GM12878 (cell line): ENCODE measurements at regions of chr4 and their contacts with region 1.

Region 1: DNA sequence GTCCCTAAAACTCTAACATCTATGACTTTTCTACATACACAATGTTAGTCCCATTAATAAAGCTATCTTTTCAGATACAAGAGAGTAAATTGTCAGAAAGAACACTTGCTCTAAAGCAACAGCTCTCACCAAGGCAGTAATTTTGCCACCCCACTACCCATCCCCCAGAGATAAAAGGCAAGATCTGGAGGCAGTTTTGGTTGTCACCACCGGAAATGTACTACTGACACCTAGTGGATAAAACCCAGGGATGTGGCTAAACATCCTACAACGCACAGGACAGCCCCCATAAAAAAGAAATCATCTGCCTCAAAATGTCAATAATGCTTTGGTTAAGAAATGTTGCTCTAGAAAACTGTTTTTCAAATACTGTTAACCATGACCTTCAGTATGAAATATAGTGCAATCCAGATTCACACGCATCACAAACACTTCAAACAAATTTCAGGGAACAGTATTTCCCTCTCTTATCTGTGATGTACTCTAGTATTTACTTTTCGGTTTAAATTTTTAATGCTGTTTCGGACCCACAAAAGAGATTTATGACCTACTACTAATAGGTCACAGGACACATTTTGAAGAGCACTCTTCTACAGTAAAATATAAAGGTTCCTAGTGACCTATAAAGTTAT is 5.1 kb downstream of the FBXL5 start:
- DNase-seq: peak; percentile 45
- ATAC-seq: peak; percentile 75
- H3K4me3 ChIP-seq: 0 out of 2 replicates have a peak overlapping the region, but pooled peaks have one; percentile 31
- H3K27ac ChIP-seq: no peak overlapping the region
- H3K4me1 ChIP-seq: peaks cover 25% of the 10 kb centered on the region
- H3K27me3 ChIP-seq: no peaks in the 10 kb centered on the region
- CTCF ChIP-seq: peak; percentile 63 to 80 (median 78)
- EP300 ChIP-seq: no peak
- POLR2A ChIP-seq: no peak
- RAD21 ChIP-seq: peak; percentile 87

Region 2: GRCh38 chr4:14695095-14695845 is 954.8 kb before region 1 on chr4:
- CTCF ChIA-PET with region 1: no interaction called
- POLR2A ChIA-PET with region 1: no interaction called
- RAD21 ChIA-PET with region 1: no interaction called
- SMC1A ChIA-PET with region 1: no interaction called
- in situ Hi-C with region 1: no loop called
- intact Hi-C with region 1: no loop called
- DNase-seq: no peak
- ATAC-seq: no peak
- H3K4me3 ChIP-seq: no peak overlapping the region
- H3K27ac ChIP-seq: no peak overlapping the region
- H3K4me1 ChIP-seq: no peaks in the 10 kb centered on the region
- H3K27me3 ChIP-seq: no peaks in the 10 kb centered on the region
- CTCF ChIP-seq: no peak
- EP300 ChIP-seq: no peak
- POLR2A ChIP-seq: no peak
- RAD21 ChIP-seq: no peak

Region 3: DNA sequence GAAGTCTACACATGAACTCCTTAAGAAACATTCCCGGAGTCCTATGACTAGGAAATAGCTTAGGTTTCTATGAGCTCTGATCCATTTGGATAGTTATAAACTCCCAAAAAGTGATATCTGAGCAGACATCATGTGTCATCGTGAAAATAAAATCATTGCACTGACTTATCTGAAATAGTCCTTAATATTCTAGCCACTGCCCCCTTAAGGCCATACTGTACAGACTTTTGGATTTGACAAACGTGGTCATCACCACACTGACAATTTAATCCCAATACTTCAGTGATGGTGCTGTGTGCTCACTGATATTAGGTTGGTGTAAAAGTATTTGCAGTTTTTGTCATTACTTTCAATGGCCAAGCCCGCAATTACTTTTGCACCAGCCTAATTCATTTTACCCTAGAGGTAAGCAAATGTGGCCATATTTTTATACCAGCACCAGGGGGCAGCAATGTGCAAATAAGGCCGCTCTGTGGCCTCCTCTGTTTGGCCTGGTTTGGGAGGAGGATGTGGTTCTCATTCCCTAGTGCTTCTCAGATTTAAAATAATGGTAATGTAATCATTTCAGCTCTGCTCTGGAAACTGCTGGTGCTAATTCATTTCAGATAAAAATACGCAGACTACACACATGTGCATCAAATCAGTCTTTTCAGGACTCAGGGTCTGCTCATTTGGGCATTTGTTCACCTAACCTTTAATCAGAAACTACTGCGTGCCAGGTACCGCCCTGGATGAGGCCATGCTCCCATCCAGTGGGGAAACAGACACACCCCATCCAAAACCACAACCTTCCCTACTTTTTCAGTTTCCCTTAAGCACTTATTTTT is 418.6 kb before region 1 on chr4:
- CTCF ChIA-PET with region 1: interaction called, 14 read pairs
- POLR2A ChIA-PET with region 1: no interaction called
- RAD21 ChIA-PET with region 1: interaction called, 4 read pairs
- SMC1A ChIA-PET with region 1: interaction called, 3 read pairs
- in situ Hi-C with region 1: loop called (anchors 5 kb)
- intact Hi-C with region 1: loop called (anchors 2 kb)
- DNase-seq: peak; percentile 16
- ATAC-seq: peak; percentile 97
- H3K4me3 ChIP-seq: no peak overlapping the region
- H3K27ac ChIP-seq: no peak overlapping the region
- H3K4me1 ChIP-seq: peaks cover 11% of the 10 kb centered on the region
- H3K27me3 ChIP-seq: no peaks in the 10 kb centered on the region; a peak in 1 of 4 replicates
- CTCF ChIP-seq: peak; percentile 67 to 78 (median 69)
- EP300 ChIP-seq: no peak
- POLR2A ChIP-seq: no peak
- RAD21 ChIP-seq: peak; percentile 71

Region 4: GRCh38 chr4:15396157-15396800 is 253.8 kb before region 1 on chr4:
- CTCF ChIA-PET with region 1: interaction called, 5 read pairs
- POLR2A ChIA-PET with region 1: no interaction called
- RAD21 ChIA-PET with region 1: interaction called, 3 read pairs
- SMC1A ChIA-PET with region 1: interaction called, 10 read pairs
- in situ Hi-C with region 1: no loop called
- intact Hi-C with region 1: no loop called
- DNase-seq: no peak
- ATAC-seq: peak; percentile 95
- H3K4me3 ChIP-seq: no peak overlapping the region
- H3K27ac ChIP-seq: no peak overlapping the region
- H3K4me1 ChIP-seq: peaks cover 8% of the 10 kb centered on the region
- H3K27me3 ChIP-seq: no peaks in the 10 kb centered on the region
- CTCF ChIP-seq: peak; percentile 78 to 82 (median 82)
- EP300 ChIP-seq: no peak
- POLR2A ChIP-seq: no peak
- RAD21 ChIP-seq: peak; percentile 74

Region 5: DNA sequence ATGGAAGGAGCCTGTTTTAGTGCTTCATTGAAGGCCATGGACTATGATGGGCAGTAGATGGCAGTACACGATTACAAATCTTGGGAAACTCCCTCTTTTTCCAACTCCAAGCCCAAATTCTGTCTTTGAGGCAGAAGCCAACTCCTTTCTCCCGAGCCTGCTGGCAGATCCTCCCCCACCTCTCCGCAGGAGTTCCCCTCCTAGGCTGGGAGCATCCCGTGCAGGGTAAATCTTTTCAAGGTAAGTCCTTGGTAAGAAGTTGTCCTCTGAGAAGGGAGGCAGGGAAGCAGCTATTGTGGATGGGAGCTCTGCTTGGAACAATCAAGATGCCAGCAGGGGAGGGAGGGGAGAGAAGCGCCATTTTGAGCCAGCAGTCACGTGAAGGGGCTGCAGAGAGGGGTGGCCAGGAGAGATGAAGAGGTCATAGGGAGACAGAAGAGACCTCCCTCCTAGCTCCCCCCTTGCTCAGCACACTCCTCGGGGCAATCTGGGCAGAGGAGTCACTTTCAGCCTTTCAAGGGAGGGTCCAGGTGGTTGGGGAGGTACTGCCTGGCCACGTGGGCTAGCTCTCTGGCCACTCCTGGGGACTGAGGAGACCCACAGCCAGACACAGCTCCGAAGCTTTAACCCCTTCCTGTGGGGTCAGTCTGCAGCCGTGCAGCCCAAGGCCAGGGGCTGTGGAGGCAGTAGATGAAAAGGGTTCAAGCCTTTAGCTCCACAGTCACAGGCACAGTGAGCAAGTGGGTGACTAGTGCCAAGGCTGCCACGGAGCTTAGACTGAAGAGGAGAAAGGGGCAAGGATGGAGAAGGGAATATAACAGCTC is 170.7 kb before region 1 on chr4:
- CTCF ChIA-PET with region 1: interaction called, 37 read pairs
- POLR2A ChIA-PET with region 1: no interaction called
- RAD21 ChIA-PET with region 1: interaction called, 16 read pairs
- SMC1A ChIA-PET with region 1: interaction called, 10 read pairs
- in situ Hi-C with region 1: no loop called
- intact Hi-C with region 1: loop called (anchors 1 kb)
- DNase-seq: no peak
- ATAC-seq: peak; percentile 84
- H3K4me3 ChIP-seq: no peak overlapping the region
- H3K27ac ChIP-seq: no peak overlapping the region
- H3K4me1 ChIP-seq: no peaks in the 10 kb centered on the region
- H3K27me3 ChIP-seq: no peaks in the 10 kb centered on the region
- CTCF ChIP-seq: peak; percentile 51 to 74 (median 57); a peak in 5 of 6 replicates
- EP300 ChIP-seq: no peak
- POLR2A ChIP-seq: no peak
- RAD21 ChIP-seq: peak; percentile 79

Region 6: DNA sequence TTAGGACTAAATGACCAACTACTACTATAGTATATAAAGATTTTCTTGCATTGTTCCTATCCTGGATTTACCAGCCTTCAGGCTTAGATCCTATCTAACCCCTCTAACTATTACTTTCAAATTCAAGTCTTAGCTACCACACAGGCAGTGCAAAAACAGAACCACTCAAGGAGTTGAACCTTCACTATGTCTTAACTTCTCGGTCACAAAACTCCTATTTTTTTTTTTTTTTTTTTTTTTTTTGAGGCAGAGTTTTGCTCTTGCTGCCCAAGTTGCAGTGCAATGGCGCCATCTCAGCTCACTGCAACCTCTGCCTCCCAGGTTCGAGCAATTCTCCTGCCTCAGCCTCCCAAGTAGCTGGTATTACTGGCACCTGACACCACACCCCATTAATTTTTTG is 25.3 kb after region 1 on chr4:
- CTCF ChIA-PET with region 1: interaction called, 23 read pairs
- POLR2A ChIA-PET with region 1: interaction called, 15 read pairs
- RAD21 ChIA-PET with region 1: interaction called, 15 read pairs
- SMC1A ChIA-PET with region 1: interaction called, 34 read pairs
- in situ Hi-C with region 1: no loop called
- intact Hi-C with region 1: no loop called
- DNase-seq: no peak
- ATAC-seq: peak; percentile 35
- H3K4me3 ChIP-seq: no peak overlapping the region
- H3K27ac ChIP-seq: no peak overlapping the region
- H3K4me1 ChIP-seq: peaks cover 4% of the 10 kb centered on the region; the same call in 1 of the 2 replicates
- H3K27me3 ChIP-seq: no peaks in the 10 kb centered on the region
- CTCF ChIP-seq: no peak
- EP300 ChIP-seq: no peak
- POLR2A ChIP-seq: no peak
- RAD21 ChIP-seq: no peak

Region 7: GRCh38 chr4:15738877-15739276 is 88.8 kb after region 1 on chr4:
- CTCF ChIA-PET with region 1: no interaction called
- POLR2A ChIA-PET with region 1: no interaction called
- RAD21 ChIA-PET with region 1: no interaction called
- SMC1A ChIA-PET with region 1: no interaction called
- in situ Hi-C with region 1: no loop called
- intact Hi-C with region 1: no loop called
- DNase-seq: no peak
- ATAC-seq: no peak
- H3K4me3 ChIP-seq: no peak overlapping the region
- H3K27ac ChIP-seq: no peak overlapping the region
- H3K4me1 ChIP-seq: no peaks in the 10 kb centered on the region
- H3K27me3 ChIP-seq: no peaks in the 10 kb centered on the region; a peak in 1 of 4 replicates
- CTCF ChIP-seq: no peak
- EP300 ChIP-seq: no peak
- POLR2A ChIP-seq: no peak
- RAD21 ChIP-seq: no peak